GM10248 (cell line): ENCODE measurements at regions of chr16 and their contacts with region 1.

Region 1: DNA sequence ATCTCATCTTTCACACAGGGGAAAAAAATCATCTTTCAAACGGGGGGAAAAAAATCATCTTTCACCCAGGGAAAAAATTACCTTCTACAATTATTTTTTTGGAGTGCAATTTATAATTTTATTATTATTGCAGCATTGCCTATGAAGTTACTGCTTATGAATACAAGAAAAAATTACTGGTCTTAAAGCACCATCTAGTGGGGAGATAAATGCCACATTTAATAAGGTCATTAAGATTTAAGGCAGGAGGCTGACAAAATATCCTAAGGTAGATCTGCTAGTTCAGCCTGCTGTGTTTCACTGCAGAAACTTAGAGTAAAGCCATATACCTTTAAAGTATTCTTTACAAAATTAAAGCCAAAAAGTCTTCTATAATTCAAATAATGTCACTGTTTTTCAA is 13.7 kb downstream of the SHCBP1 start:
- DNase-seq: no peak
- CTCF ChIP-seq: peak; percentile 31

Region 2: DNA sequence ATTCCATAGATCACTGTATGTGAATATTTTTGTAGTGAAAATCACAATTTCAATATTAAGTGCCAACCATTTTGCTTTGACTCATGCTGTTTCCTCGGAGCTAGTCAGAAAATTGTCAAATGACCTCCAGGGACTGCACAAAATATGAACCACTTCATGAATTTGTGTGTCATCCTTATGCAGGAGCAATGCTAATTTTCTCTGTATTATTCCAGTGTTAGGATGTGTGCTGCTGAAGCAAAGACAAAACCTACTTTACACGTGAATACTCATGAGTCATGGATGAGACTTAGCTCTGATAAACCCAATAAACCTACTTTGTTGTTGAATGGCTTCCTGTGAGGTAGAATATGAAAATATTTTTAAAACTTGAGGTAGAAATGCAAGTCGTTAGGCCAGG is 51.6 kb before region 1 on chr16:
- CTCF ChIA-PET with region 1: interaction called, 104 read pairs
- POLR2A ChIA-PET with region 1: no interaction called
- DNase-seq: no peak
- CTCF ChIP-seq: no peak

Region 3: GRCh38 chr16:46562979-46563378 is 44.5 kb before region 1 on chr16:
- CTCF ChIA-PET with region 1: interaction called, 10 read pairs
- POLR2A ChIA-PET with region 1: no interaction called
- DNase-seq: no peak
- CTCF ChIP-seq: no peak

Region 4: DNA sequence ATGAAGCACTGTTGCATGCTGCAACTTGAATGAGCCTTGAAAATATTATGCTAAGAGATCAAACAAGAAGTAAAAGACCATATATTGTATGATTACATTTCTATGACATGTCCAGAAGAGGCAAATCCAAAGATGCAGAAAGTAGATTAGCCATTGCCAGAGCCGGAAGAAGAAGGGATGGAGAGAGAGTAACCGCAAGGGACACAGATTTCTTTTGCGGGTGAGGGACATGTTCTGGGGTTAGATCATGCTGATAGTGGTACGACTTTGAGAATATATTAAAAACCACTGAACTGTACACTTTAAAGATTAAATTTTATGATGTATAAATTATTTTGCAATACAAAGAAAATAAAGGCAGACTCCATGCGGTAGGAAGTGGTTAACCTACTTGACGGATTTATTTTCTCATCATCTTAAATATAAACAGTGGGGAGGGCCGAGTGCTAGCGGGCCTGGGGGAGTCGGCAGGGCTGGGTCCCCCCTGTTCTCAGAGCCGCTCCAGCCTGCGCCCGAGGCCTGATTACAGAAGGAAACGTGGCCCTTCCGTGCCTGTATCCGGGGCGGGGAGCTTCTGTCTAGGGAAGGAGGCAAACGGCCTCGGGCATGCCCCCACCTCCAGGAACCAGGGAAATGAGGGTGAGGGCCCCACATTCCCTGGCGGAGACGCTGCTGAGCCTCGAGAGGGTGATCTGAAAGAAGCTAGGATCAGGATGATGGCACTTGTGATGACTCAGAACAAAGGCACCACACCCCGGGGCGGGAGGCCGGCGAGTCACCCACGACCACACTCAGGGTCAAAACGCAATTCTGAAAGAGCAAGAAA is 34.3 kb before region 1 on chr16:
- CTCF ChIA-PET with region 1: interaction called, 15 read pairs
- POLR2A ChIA-PET with region 1: no interaction called
- DNase-seq: peak; percentile 25
- CTCF ChIP-seq: no peak

Region 5: DNA sequence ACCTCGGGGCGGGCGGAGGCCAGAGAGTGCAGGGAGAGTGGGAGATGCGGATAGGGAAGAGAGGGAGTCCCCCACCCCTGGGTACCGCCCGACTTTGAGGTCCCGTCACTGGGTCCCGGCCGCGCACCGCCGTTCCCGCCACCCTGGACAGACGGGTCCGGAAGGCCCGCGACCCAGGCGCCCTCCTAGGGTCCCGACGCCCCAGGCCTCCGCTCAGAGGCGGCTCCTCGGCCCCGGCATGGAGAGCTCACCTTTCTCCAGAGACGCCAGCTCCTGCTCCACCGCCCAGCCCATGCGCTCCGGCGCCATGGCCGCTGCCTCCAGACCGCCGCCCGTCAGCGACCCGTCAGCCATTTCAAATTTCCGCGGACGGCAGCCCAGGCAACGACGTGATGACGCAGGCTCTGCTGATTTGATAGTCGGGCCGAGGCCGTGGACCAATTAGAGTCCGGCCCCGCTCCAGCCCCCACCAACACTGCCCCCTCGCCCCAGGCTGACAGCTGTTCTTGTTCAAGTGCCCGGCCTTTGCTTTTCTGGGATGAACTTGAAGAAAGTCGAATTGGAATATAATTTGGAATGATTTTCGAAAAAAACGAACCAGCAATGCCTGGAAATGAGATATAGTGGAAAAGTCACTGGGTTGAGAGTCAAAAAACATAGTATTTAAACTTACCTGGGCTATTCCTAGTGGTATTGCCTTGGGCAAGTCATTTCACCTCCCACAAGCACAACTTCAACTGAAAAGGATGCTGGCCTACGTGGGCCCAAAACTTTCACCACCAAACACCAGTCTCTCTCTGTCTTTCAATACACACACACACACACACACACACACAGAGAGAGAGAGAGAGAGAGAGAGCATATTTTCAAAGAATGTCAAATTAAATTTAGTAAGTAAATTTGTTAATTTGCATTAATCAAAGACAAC is 13.7 kb after region 1 on chr16 and contains the start of gene SHCBP1:
- CTCF ChIA-PET with region 1: interaction called, 12 read pairs
- POLR2A ChIA-PET with region 1: no interaction called
- DNase-seq: peak; percentile 93
- CTCF ChIP-seq: no peak

Region 6: GRCh38 chr16:46711106-46712058 is 103.9 kb after region 1 on chr16:
- CTCF ChIA-PET with region 1: no interaction called
- POLR2A ChIA-PET with region 1: no interaction called
- DNase-seq: no peak
- CTCF ChIP-seq: no peak

Region 7: GRCh38 chr16:47358816-47359215 is 751.3 kb after region 1 on chr16:
- CTCF ChIA-PET with region 1: no interaction called
- POLR2A ChIA-PET with region 1: no interaction called
- DNase-seq: no peak
- CTCF ChIP-seq: no peak